ENCODE measurements at regions of chr17 and their contacts with region 1.

Region 1: DNA sequence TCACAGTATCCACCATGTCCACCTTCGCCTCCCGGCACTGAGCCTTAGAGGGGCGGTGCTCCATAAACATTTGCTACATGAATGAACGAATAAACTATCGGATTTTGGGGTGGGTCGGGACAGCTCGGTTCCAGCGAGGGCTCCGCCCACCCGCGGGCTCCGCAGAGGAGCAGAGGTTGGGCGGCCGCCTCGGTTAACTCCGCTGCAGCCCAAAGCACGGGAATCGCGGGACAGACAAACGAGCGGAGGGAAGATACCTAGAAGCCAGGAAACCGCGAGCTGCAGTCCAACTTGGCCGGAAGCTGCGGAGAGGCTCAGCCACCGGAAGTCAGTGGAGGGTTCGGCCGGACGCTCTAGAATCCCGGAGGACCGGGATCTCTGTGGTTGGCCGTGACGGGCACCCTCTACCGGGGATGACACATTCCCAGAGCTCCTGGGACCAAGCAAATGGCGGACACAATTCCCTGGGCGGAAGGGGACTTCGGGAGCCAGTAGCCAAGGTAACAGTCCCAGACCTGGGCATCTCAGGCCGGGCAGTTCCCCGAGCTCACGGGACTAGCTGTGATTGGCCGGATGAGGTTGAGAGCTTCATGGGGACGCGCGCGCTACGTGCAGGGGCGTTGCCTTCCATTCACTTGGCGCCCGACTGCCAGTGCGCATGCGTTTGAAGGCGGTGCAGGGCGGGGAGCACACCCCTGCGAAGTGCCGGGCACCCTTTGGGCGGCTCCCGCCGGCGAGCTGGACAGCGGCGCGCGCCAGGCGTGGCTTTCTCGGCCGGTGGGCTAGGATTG is 501 bp upstream of the MAPK7 start:
- DNase-seq: peak; percentile 97 to 99
- ATAC-seq: peak; percentile 91 to 93
- H3K4me3 ChIP-seq: peak overlapping the region; percentile 64 to 98 (median 83)
- H3K27ac ChIP-seq: peak overlapping the region; percentile 83 to 97 (median 94)
- H3K4me1 ChIP-seq: peaks cover 7 to 16% of the 10 kb centered on the region in 2 donors
- H3K27me3 ChIP-seq: no peaks in the 10 kb centered on the region
- CTCF ChIP-seq: no peak
- POLR2A ChIP-seq: peak; percentile 75 to 91

Region 2: GRCh38 chr17:19347323-19348080 is 30.3 kb before region 1 on chr17:
- in situ Hi-C with region 1: no loop called
- intact Hi-C with region 1: loop called (anchors 2 kb)
- DNase-seq: no peak
- ATAC-seq: peak; percentile 6 to 13
- H3K4me3 ChIP-seq: no peak overlapping the region
- H3K27ac ChIP-seq: peak overlapping the region; percentile 68 to 81 (median 80)
- H3K4me1 ChIP-seq: peaks cover 22 to 27% of the 10 kb centered on the region in 2 donors
- H3K27me3 ChIP-seq: no peaks in the 10 kb centered on the region
- CTCF ChIP-seq: no peak
- POLR2A ChIP-seq: no peak

Region 3: GRCh38 chr17:19362277-19363113 is 15.3 kb before region 1 on chr17 and contains the start of gene B9D1:
- in situ Hi-C with region 1: no loop called
- intact Hi-C with region 1: loop called (anchors 1 kb)
- DNase-seq: peak; percentile 86 to 93
- ATAC-seq: peak; percentile 96 to 97
- H3K4me3 ChIP-seq: peak within 1 kb of the TSS; percentile 60 to 86 (median 72)
- H3K27ac ChIP-seq: peak within 1 kb of the TSS; percentile 79 to 92 (median 84)
- H3K4me1 ChIP-seq: peaks cover 4 to 9% of the 10 kb centered on the region in 2 donors
- H3K27me3 ChIP-seq: no peaks in the 10 kb centered on the region
- CTCF ChIP-seq: peak; percentile 99
- POLR2A ChIP-seq: peak in 1 of 2 donors; percentile 44
- total RNA-seq, gene B9D1: 6.5 to 16.4 (median 14.5) TPM

Region 4: GRCh38 chr17:19447085-19447583 is 69.3 kb after region 1 on chr17:
- in situ Hi-C with region 1: no loop called
- intact Hi-C with region 1: loop called (anchors 5 kb)
- DNase-seq: peak; percentile 53 to 60
- ATAC-seq: peak; percentile 88 to 93
- H3K4me3 ChIP-seq: no peak overlapping the region
- H3K27ac ChIP-seq: peak overlapping the region; percentile 1 to 68 (median 50)
- H3K4me1 ChIP-seq: peaks cover 0 to 3% of the 10 kb centered on the region in 2 donors
- H3K27me3 ChIP-seq: no peaks in the 10 kb centered on the region
- CTCF ChIP-seq: peak; percentile 89 to 96 (median 94)
- POLR2A ChIP-seq: no peak

Region 5: GRCh38 chr17:19507775-19508576 is 130.2 kb after region 1 on chr17:
- in situ Hi-C with region 1: no loop called
- intact Hi-C with region 1: loop called (anchors 5 kb)
- DNase-seq: peak; percentile 71 to 78
- ATAC-seq: peak; percentile 84 to 94
- H3K4me3 ChIP-seq: peak overlapping the region; percentile 69 to 93 (median 77)
- H3K27ac ChIP-seq: peak overlapping the region; percentile 76 to 88 (median 82)
- H3K4me1 ChIP-seq: no peaks in the 10 kb centered on the region
- H3K27me3 ChIP-seq: peaks cover 0 to 4% (median 0%) of the 10 kb centered on the region in 3 donors
- CTCF ChIP-seq: no peak
- POLR2A ChIP-seq: peak; percentile 19 to 38

Region 6: GRCh38 chr17:19533718-19534561 is 156.1 kb after region 1 on chr17 and contains the start of gene SLC47A1:
- in situ Hi-C with region 1: no loop called
- intact Hi-C with region 1: loop called (anchors 10 kb)
- DNase-seq: peak in 1 of 2 donors; percentile 56
- ATAC-seq: peak; percentile 44 to 48
- H3K4me3 ChIP-seq: peak within 1 kb of the TSS; percentile 72 to 89 (median 80)
- H3K27ac ChIP-seq: peak within 1 kb of the TSS; percentile 89 to 94 (median 91)
- H3K4me1 ChIP-seq: peaks cover 42 to 43% of the 10 kb centered on the region in 2 donors
- H3K27me3 ChIP-seq: no peaks in the 10 kb centered on the region
- CTCF ChIP-seq: no peak
- POLR2A ChIP-seq: peak; percentile 62 to 67
- total RNA-seq, gene SLC47A1: 34.2 to 257 (median 133) TPM

Region 7: DNA sequence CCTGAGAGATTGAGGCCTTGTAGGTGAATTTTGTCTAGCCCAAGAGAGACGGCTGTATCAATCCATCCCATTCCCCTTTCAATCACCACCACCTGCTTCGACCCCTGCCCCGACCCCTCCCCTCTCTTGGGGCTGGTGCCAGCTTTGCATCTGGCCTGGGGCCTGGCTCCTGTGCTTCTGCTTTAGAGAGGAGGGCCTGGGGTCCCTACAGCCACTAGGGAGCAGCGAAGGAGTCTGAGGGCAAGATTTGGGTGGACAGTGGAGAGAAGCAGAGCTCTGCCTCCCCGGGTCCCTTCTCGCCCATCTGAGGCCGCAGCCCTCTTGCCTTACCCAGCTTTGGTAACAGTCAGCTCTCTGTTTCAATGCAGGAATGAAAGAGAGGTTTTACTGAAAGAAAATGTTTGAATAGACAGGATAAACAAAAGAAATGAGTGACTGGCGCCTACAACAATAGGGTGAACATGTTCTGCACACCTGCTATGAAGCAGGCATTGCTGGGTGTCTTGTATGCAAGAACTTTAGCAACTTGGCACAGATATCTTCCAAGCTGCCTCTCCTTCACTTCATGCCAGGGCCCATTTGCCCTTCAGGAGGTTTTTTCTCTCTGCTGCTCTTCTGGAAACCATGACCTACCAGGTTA is 213.2 kb after region 1 on chr17:
- in situ Hi-C with region 1: no loop called
- intact Hi-C with region 1: no loop called
- DNase-seq: no peak
- ATAC-seq: no peak
- H3K4me3 ChIP-seq: no peak overlapping the region
- H3K27ac ChIP-seq: no peak overlapping the region
- H3K4me1 ChIP-seq: no peaks in the 10 kb centered on the region
- H3K27me3 ChIP-seq: no peaks in the 10 kb centered on the region
- CTCF ChIP-seq: no peak
- POLR2A ChIP-seq: no peak

Region 8: DNA sequence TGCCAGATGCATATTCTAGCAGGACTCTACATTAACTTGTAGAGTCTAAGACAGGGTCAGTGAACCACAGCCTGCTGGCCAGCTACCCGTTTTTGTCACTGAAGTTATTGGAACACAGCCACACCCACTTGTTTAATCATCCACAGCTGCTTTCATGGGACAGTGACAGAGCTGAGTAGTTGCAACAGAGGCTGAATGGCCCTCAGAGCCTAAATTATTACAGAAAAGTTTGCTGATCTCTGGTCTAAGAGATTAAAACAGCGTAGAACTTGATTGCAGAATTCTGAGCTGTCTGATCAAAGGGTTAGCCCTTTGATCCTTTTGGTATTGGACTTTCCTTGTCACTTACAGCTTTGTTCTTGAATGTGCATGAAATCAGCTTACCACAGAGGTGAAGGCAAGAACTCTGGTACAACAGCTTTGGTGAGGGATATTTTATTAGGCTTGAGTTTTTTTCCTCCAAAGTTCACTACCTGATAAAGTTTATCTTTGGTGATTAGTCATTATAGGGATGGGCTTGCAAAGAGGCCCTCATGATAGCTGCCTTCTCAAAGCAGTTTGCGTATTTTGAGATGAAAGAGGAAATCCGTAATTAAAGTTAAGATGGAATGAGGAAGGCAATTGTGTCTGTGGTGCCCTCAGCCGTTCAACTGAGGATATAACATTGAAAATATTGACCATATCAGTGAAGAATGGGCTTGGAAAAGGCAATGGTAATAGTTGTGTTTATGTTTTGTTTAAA is 294.4 kb after region 1 on chr17:
- in situ Hi-C with region 1: no loop called
- intact Hi-C with region 1: no loop called
- DNase-seq: peak; percentile 59 to 77
- ATAC-seq: peak; percentile 99 to 100
- H3K4me3 ChIP-seq: no peak overlapping the region
- H3K27ac ChIP-seq: peak overlapping the region; percentile 74 to 87 (median 76)
- H3K4me1 ChIP-seq: peaks cover 0 to 15% of the 10 kb centered on the region in 2 donors
- H3K27me3 ChIP-seq: no peaks in the 10 kb centered on the region
- CTCF ChIP-seq: no peak
- POLR2A ChIP-seq: no peak